Naive thymus-derived CD4-positive, alpha-beta T cell (primary cell): ENCODE measurements at regions of chr18 and their contacts with region 1.

Region 1: DNA sequence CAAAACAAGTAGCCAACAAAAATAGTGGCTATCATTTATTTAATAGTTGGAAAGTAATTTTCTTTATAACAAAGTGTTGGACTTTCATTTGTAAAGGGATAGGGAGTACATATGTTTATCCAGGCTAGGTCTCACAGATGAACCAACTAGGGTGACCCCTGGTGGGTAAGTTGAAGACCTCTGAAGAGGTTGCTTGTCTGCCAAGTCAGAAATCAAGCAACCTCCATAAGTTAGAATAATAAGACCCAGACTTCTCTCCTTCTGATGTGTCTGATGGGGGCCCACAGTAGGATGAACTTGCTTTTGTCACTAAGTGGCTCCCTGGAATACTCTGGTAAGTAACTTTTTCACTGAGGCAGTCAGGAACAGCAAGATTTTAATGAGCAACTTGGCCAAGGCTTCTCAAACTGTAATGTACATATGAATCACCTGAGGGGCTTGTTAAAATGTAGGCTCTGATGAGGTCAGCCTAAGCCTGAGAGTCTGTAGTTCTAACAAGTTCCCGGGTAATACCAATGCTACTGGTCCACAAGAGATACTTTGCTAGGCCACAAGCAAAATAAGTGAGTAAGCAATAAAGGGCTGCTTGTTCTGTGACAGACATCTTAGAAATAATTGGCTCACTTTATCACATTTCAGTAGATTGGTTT is 319.6 kb downstream of the PIK3C3 start:
- DNase-seq: peak in 1 of 9 donors; percentile 3
- ATAC-seq: no peak
- H3K4me3 ChIP-seq: no peak overlapping the region
- H3K4me3 Mint-ChIP-seq: no peak overlapping the region
- H3K27ac ChIP-seq: no peak overlapping the region
- H3K27ac Mint-ChIP-seq: no peak overlapping the region
- H3K4me1 ChIP-seq: no peaks in the 10 kb centered on the region
- H3K4me1 Mint-ChIP-seq: peaks cover 0 to 2% (median 0%) of the 10 kb centered on the region in 7 donors
- H3K27me3 ChIP-seq: no peaks in the 10 kb centered on the region
- H3K27me3 Mint-ChIP-seq: peaks cover 0 to 4% (median 0%) of the 10 kb centered on the region in 5 donors

Region 2: GRCh38 chr18:41134426-41134825 is 1140.2 kb before region 1 on chr18:
- CTCF ChIA-PET with region 1: no interaction called
- POLR2A ChIA-PET with region 1: no interaction called
- intact Hi-C with region 1: no loop called
- DNase-seq: no peak
- ATAC-seq: no peak
- H3K4me3 ChIP-seq: no peak overlapping the region
- H3K4me3 Mint-ChIP-seq: no peak overlapping the region
- H3K27ac ChIP-seq: no peak overlapping the region
- H3K27ac Mint-ChIP-seq: peak overlapping the region in 1 of 9 donors; percentile 63
- H3K4me1 ChIP-seq: no peaks in the 10 kb centered on the region
- H3K4me1 Mint-ChIP-seq: no peaks in the 10 kb centered on the region
- H3K27me3 ChIP-seq: no peaks in the 10 kb centered on the region
- H3K27me3 Mint-ChIP-seq: no peaks in the 10 kb centered on the region

Region 3: DNA sequence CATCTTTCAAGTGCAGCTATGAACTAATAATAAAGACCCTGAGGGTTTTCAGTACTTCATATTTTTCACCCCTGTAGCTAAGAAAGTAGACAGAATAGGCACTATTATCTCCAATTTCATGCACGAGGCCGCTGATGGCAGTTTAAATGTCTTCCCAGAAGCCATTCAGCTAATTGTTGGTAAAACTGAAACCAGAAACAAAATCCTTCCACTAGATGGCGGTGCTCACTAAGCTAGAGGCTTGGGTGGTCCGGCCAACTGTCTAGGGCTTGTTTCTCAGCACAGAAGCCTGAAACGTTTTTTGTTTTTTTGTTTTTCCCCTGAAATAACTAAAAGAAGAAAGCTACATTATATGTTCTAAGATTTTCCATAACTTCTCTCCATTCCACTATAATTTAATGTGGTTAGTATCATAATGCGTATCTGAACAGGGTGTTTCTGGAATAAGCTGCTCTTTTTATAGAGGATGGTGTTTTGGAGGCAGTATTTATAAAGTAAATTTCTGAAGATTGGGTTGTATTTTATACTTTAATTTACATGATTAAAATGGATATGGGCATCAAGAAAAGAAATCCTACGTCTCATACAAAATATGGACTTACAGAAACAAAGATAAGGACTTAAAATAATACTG is 160.2 kb before region 1 on chr18:
- CTCF ChIA-PET with region 1: no interaction called
- POLR2A ChIA-PET with region 1: no interaction called
- intact Hi-C with region 1: loop called in 1 of 2 experiments (anchors 5 kb)
- DNase-seq: peak; percentile 7 to 57 (median 49)
- ATAC-seq: peak; percentile 79
- H3K4me3 ChIP-seq: no peak overlapping the region
- H3K4me3 Mint-ChIP-seq: peak overlapping the region in 6 of 10 donors; percentile 23 to 46 (median 44)
- H3K27ac ChIP-seq: no peak overlapping the region
- H3K27ac Mint-ChIP-seq: peak overlapping the region in 2 of 9 donors; percentile 15 to 43
- H3K4me1 ChIP-seq: peaks cover 0 to 4% of the 10 kb centered on the region in 2 donors
- H3K4me1 Mint-ChIP-seq: peaks cover 0 to 13% (median 12%) of the 10 kb centered on the region in 7 donors
- H3K27me3 ChIP-seq: no peaks in the 10 kb centered on the region
- H3K27me3 Mint-ChIP-seq: peaks cover 0 to 20% (median 0%) of the 10 kb centered on the region in 5 donors